MCF 10A (cell line): ENCODE measurements at regions of chr5 and their contacts with region 1.

Region 1: DNA sequence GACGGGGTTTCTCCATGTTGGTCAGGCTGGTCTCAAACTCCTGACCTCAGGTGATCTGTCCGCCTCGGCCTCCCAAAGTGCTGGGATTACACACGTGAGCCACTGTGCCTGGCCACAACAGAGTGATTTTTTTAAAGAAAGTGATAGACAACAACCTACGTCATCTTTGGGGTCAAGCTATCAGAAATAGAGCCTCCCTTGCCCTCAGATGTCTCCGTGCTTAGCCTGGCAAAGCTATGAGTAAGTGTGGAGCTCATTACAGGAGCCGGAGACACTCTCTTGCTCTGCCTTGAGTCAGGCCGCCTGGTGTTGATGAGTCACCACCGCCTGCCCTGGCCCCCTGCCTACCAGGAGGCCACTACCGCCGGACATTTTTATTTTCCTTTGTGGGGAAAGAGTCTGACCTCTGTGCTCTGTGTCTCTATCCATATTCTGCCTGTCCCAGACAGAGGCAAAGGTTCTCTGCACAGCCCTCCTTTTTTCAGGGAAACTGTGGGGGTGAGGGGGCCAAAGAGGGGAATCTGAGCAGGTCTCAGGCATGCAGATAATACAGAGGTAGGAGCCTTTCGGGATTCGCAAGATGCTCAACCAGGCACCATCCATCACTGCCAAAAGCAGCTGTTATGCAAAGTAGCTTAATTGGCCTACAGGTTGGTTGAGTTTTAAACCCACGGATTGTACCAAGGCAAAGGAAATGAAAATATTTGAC is 123.7 kb upstream of the CPEB4 start:
- DNase-seq: peak; percentile 99
- H3K4me3 Mint-ChIP-seq: peak overlapping the region; percentile 22
- H3K27ac Mint-ChIP-seq: peak overlapping the region; percentile 77
- H3K4me1 Mint-ChIP-seq: peaks cover 40% of the 10 kb centered on the region
- H3K27me3 Mint-ChIP-seq: no peaks in the 10 kb centered on the region
- CTCF ChIP-seq: no peak

Region 2: GRCh38 chr5:173271419-173271818 is 493.1 kb before region 1 on chr5:
- CTCF ChIA-PET with region 1: no interaction called
- POLR2A ChIA-PET with region 1: no interaction called
- intact Hi-C with region 1: no loop called
- DNase-seq: no peak
- H3K4me3 Mint-ChIP-seq: no peak overlapping the region
- H3K27ac Mint-ChIP-seq: no peak overlapping the region
- H3K4me1 Mint-ChIP-seq: no peaks in the 10 kb centered on the region
- H3K27me3 Mint-ChIP-seq: peaks cover 28% of the 10 kb centered on the region
- CTCF ChIP-seq: no peak

Region 3: GRCh38 chr5:173633304-173633703 is 131.2 kb before region 1 on chr5:
- CTCF ChIA-PET with region 1: no interaction called
- POLR2A ChIA-PET with region 1: interaction called, 9 read pairs
- intact Hi-C with region 1: loop called (anchors 1 kb)
- DNase-seq: peak; percentile 90
- H3K4me3 Mint-ChIP-seq: no peak overlapping the region
- H3K27ac Mint-ChIP-seq: no peak overlapping the region
- H3K4me1 Mint-ChIP-seq: peaks cover 12% of the 10 kb centered on the region
- H3K27me3 Mint-ChIP-seq: no peaks in the 10 kb centered on the region
- CTCF ChIP-seq: no peak

Region 4: GRCh38 chr5:173714551-173715428 is 49.7 kb before region 1 on chr5:
- CTCF ChIA-PET with region 1: interaction called, 3 read pairs
- POLR2A ChIA-PET with region 1: interaction called, 5 read pairs
- intact Hi-C with region 1: loop called (anchors 1 kb)
- DNase-seq: peak; percentile 96
- H3K4me3 Mint-ChIP-seq: no peak overlapping the region
- H3K27ac Mint-ChIP-seq: peak overlapping the region; percentile 77
- H3K4me1 Mint-ChIP-seq: peaks cover 36% of the 10 kb centered on the region
- H3K27me3 Mint-ChIP-seq: no peaks in the 10 kb centered on the region
- CTCF ChIP-seq: no peak

Region 5: GRCh38 chr5:173789031-173789920 is 24.8 kb after region 1 on chr5:
- CTCF ChIA-PET with region 1: no interaction called
- POLR2A ChIA-PET with region 1: interaction called, 112 read pairs
- intact Hi-C with region 1: no loop called
- DNase-seq: peak; percentile 98
- H3K4me3 Mint-ChIP-seq: no peak overlapping the region
- H3K27ac Mint-ChIP-seq: peak overlapping the region; percentile 77
- H3K4me1 Mint-ChIP-seq: peaks cover 53% of the 10 kb centered on the region
- H3K27me3 Mint-ChIP-seq: no peaks in the 10 kb centered on the region
- CTCF ChIP-seq: no peak

Region 6: GRCh38 chr5:173802670-173803165 is 38.2 kb after region 1 on chr5:
- CTCF ChIA-PET with region 1: no interaction called
- POLR2A ChIA-PET with region 1: interaction called, 25 read pairs
- intact Hi-C with region 1: loop called (anchors 2 kb)
- DNase-seq: peak; percentile 99
- H3K4me3 Mint-ChIP-seq: no peak overlapping the region
- H3K27ac Mint-ChIP-seq: peak overlapping the region; percentile 80
- H3K4me1 Mint-ChIP-seq: peaks cover 44% of the 10 kb centered on the region
- H3K27me3 Mint-ChIP-seq: no peaks in the 10 kb centered on the region
- CTCF ChIP-seq: no peak

Region 7: GRCh38 chr5:173917788-173918786 is 153.6 kb after region 1 on chr5:
- CTCF ChIA-PET with region 1: interaction called, 3 read pairs
- POLR2A ChIA-PET with region 1: interaction called, 14 read pairs
- intact Hi-C with region 1: loop called (anchors 2 kb)
- DNase-seq: peak; percentile 94
- H3K4me3 Mint-ChIP-seq: no peak overlapping the region
- H3K27ac Mint-ChIP-seq: no peak overlapping the region
- H3K4me1 Mint-ChIP-seq: peaks cover 8% of the 10 kb centered on the region
- H3K27me3 Mint-ChIP-seq: no peaks in the 10 kb centered on the region
- CTCF ChIP-seq: no peak